Endothelial cell of umbilical vein (primary cell): ENCODE measurements at regions of chr13 and their contacts with region 1.

Region 1: GRCh38 chr13:48303359-48304142 is at the start of gene RB1:
- DNase-seq: peak; percentile 92
- H3K4me3 ChIP-seq: peak within 1 kb of the TSS; percentile 94 to 98 (median 97)
- H3K27ac ChIP-seq: peak within 1 kb of the TSS; percentile 94
- H3K4me1 ChIP-seq: peaks cover 21% of the 10 kb centered on the region
- H3K27me3 ChIP-seq: no peaks in the 10 kb centered on the region
- CTCF ChIP-seq: no peak
- POLR2A ChIP-seq: no peak
- total RNA-seq, gene RB1: 34.8 and 41.2 TPM in 2 replicates

Region 2: GRCh38 chr13:48000778-48001628 is 302.5 kb before region 1 on chr13 and contains the start of gene SUCLA2:
- CTCF ChIA-PET with region 1: no interaction called
- POLR2A ChIA-PET with region 1: no interaction called
- dilution Hi-C with region 1: no loop called
- intact Hi-C with region 1: loop called (anchors 1 kb)
- DNase-seq: peak; percentile 87
- H3K4me3 ChIP-seq: peak within 1 kb of the TSS; percentile 88 to 93 (median 92)
- H3K27ac ChIP-seq: peak within 1 kb of the TSS; percentile 62
- H3K4me1 ChIP-seq: peaks cover 15% of the 10 kb centered on the region
- H3K27me3 ChIP-seq: no peaks in the 10 kb centered on the region
- CTCF ChIP-seq: no peak
- POLR2A ChIP-seq: peak; percentile 92
- total RNA-seq, gene SUCLA2: 32.0 and 37.0 TPM in 2 replicates

Region 3: DNA sequence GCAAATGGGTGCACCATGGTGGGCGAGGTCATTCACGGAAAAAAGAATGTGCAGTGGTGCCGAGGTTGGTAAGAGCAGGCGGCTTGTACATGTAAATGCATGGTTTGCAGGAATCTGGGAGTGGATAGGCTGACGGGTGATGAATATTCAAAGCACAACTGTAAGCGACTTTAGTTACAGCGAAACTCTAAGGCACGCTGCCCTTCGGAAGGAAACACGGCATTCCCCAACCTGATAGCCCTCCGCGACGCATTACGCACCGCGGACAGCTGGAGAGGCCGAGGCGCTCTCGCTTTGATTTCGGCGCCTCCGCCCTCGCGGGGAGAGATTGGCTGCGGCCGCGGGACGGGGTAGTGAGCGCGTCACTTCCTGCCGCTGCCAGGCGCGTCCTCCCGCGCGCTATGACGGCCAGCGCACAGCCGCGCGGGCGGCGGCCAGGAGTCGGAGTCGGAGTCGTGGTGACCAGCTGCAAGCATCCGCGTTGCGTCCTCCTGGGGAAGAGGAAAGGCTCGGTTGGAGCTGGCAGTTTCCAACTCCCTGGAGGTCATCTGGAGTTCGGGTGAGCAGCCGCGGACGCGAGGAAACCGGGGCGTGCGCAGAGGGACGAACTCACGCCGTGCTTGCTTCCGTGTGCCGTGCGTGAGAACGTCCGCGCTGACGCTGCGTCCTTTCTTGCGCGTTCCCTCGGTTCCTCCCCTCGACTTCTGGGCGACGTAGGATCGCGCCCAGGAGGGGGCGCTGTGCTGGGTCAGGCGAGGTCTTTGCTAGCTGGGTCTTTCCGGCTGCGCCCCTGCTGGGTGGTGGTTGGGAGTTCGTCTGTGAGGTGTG is 266.0 kb before region 1 on chr13 and contains the start of gene NUDT15:
- CTCF ChIA-PET with region 1: no interaction called
- POLR2A ChIA-PET with region 1: no interaction called
- dilution Hi-C with region 1: no loop called
- intact Hi-C with region 1: loop called (anchors 5 kb)
- DNase-seq: peak; percentile 96
- H3K4me3 ChIP-seq: peak within 1 kb of the TSS; percentile 54 to 75 (median 72)
- H3K27ac ChIP-seq: peak within 1 kb of the TSS; percentile 82
- H3K4me1 ChIP-seq: peaks cover 16% of the 10 kb centered on the region
- H3K27me3 ChIP-seq: no peaks in the 10 kb centered on the region
- CTCF ChIP-seq: peak; percentile 100
- POLR2A ChIP-seq: peak; percentile 95
- total RNA-seq, gene NUDT15: 20.6 and 21.6 TPM in 2 replicates

Region 4: DNA sequence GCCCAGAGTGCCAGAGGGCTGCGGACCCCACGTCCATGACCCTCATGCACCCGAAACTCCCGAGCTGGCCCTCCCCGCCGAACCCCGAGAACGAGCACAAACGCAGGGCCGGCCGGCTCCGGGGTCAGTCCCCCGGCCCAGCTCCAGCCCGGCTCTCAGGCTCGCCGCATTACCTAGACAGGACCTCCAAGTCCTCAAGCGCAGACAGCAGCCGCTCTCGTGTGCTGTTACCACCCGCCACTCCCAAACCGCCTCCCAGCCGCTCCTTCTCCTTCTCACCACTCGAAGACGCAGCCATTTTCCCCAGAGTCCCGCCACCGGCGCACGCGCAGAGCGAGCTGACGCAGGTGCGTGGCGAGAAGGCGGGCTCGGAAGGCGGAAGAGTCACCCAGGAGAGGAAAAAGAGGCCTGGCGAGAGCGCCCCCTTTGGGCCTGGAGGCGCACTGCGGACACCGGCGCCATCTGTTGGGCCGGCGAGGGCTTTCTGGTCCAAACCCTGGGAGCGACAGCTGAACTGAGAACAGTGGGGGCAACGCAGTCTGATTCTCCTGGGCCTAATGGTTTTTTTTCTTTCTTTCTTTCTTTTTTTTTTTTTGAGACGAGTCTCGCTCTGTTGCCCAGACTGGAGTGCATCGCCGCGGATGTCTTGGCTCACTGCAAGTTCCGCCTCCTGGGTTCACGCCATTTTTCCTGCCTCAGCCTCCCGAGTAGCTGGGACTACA is 208.6 kb before region 1 on chr13 and contains the start of gene MED4:
- CTCF ChIA-PET with region 1: no interaction called
- POLR2A ChIA-PET with region 1: no interaction called
- dilution Hi-C with region 1: no loop called
- intact Hi-C with region 1: loop called (anchors 1 kb)
- DNase-seq: peak; percentile 95
- H3K4me3 ChIP-seq: peak within 1 kb of the TSS; percentile 84 to 95 (median 86)
- H3K27ac ChIP-seq: peak within 1 kb of the TSS; percentile 60
- H3K4me1 ChIP-seq: peaks cover 10% of the 10 kb centered on the region
- H3K27me3 ChIP-seq: peaks cover 5% of the 10 kb centered on the region in 2 experiments
- CTCF ChIP-seq: peak; percentile 100
- POLR2A ChIP-seq: peak; percentile 91
- total RNA-seq, gene MED4: 40.1 and 43.3 TPM in 2 replicates

Region 5: GRCh38 chr13:48126944-48127830 is 176.4 kb before region 1 on chr13:
- CTCF ChIA-PET with region 1: interaction called, 3 read pairs
- POLR2A ChIA-PET with region 1: no interaction called
- dilution Hi-C with region 1: no loop called
- intact Hi-C with region 1: loop called (anchors 1 kb)
- DNase-seq: peak; percentile 66
- H3K4me3 ChIP-seq: no peak overlapping the region
- H3K27ac ChIP-seq: no peak overlapping the region
- H3K4me1 ChIP-seq: peaks cover 15% of the 10 kb centered on the region
- H3K27me3 ChIP-seq: peaks cover 0 to under 1% of the 10 kb centered on the region in 2 experiments
- CTCF ChIP-seq: peak; percentile 58 to 62
- POLR2A ChIP-seq: no peak

Region 6: DNA sequence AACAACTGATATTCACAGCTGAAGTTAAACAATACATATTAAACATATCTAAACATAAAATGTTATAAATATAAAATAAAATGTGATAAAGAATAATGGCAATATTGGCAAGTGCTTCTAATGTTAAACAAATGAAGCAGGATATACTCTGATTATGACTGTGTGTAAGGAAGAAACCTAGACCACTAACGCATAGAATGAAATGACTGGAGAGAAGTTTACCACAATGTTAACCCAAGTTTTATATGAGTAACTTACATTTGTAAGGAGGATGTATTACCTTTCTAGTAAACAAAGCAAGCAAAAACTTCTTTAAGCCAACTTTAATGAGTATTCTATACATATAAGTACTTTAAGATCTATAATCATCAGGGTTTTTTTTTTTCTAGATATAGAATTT is 43.0 kb after region 1 on chr13:
- CTCF ChIA-PET with region 1: no interaction called
- POLR2A ChIA-PET with region 1: no interaction called
- dilution Hi-C with region 1: no loop called
- intact Hi-C with region 1: no loop called
- DNase-seq: no peak
- H3K4me3 ChIP-seq: no peak overlapping the region
- H3K27ac ChIP-seq: no peak overlapping the region
- H3K4me1 ChIP-seq: peaks cover 4% of the 10 kb centered on the region
- H3K27me3 ChIP-seq: no peaks in the 10 kb centered on the region
- CTCF ChIP-seq: no peak
- POLR2A ChIP-seq: no peak

Region 7: GRCh38 chr13:48532506-48533499 is 229.3 kb after region 1 on chr13 and contains the start of gene RCBTB2:
- CTCF ChIA-PET with region 1: no interaction called
- POLR2A ChIA-PET with region 1: no interaction called
- dilution Hi-C with region 1: no loop called
- intact Hi-C with region 1: loop called (anchors 1 kb)
- DNase-seq: peak; percentile 99
- H3K4me3 ChIP-seq: peak within 1 kb of the TSS; percentile 74 to 90 (median 78)
- H3K27ac ChIP-seq: peak within 1 kb of the TSS; percentile 73
- H3K4me1 ChIP-seq: peaks cover 10% of the 10 kb centered on the region
- H3K27me3 ChIP-seq: no peaks in the 10 kb centered on the region
- CTCF ChIP-seq: no peak
- POLR2A ChIP-seq: peak; percentile 95
- total RNA-seq, gene RCBTB2: 9.9 and 12.6 TPM in 2 replicates